H1 (cell line): ENCODE measurements at regions of chr14 and their contacts with region 1.

Region 1: DNA sequence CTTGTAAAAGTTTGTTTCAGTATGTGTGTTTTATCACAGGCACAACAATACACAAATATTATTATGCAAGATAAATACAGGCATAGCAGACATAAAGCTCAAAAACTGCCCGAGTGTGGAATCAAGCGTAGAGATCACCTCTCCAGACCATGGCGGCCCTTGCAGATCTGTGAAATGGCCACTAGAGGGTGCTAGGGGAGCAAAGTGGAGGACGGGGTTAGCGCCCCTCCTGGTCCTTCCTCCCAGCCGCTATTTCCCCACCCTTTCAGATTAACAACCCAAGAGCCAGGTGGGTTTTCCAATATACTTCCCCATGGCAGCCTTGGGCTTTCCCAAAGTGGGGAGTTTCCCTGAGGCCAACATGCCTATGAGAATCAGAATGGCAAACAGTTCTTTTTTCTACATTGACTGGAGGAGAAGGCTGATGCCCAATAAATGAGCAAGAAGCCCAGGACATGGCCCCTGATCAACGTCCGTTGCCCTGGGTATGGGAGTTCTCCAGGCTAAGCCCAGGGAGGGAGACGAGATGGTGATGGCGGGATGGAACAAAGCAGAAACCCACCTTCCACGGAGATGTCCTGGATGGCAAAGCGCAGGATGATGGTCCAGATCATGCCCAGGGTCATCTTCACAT is 67.4 kb downstream of the ACTN1 start:
- DNase-seq: peak; percentile 59 to 91
- H3K4me3 ChIP-seq: no peak overlapping the region
- H3K27ac ChIP-seq: no peak overlapping the region
- H3K4me1 ChIP-seq: no peaks in the 10 kb centered on the region; a peak in 1 of 7 replicates
- H3K27me3 ChIP-seq: no peaks in the 10 kb centered on the region
- CTCF ChIP-seq: peak; percentile 97 to 100 (median 99)
- EP300 ChIP-seq: no peak
- POLR2A ChIP-seq: no peak
- RAD21 ChIP-seq: peak; percentile 96 to 98

Region 2: DNA sequence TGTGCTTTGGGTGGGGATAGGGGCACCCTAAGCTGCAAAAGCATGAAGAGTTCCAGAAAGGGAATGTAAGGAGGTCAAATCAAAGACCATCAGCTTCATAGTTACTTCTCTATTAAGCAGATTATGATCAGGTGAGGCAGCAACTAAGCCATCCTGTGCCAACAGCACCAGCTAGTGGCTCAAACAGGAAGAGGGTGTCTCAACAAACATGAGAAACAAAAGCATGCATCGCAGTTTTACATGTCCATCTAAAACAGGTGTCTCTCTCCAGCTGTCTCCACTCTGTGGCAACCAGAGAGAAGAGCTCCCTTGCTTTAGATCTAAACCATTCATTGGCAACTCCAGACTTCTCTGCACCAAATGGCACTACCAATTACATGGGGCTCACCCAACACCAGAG is 14.5 kb after region 1 on chr14:
- CTCF ChIA-PET with region 1: interaction called, 186 read pairs
- POLR2A ChIA-PET with region 1: interaction called, 10 read pairs
- DNase-seq: no peak
- H3K4me3 ChIP-seq: no peak overlapping the region
- H3K27ac ChIP-seq: no peak overlapping the region
- H3K4me1 ChIP-seq: peaks cover 0 to 13% (median 9%) of the 10 kb centered on the region in 4 experiments; a peak in 5 of 7 replicates
- H3K27me3 ChIP-seq: no peaks in the 10 kb centered on the region
- CTCF ChIP-seq: peak; percentile 36 to 81 (median 53)
- EP300 ChIP-seq: no peak
- POLR2A ChIP-seq: no peak
- RAD21 ChIP-seq: peak; percentile 52 to 63

Region 3: DNA sequence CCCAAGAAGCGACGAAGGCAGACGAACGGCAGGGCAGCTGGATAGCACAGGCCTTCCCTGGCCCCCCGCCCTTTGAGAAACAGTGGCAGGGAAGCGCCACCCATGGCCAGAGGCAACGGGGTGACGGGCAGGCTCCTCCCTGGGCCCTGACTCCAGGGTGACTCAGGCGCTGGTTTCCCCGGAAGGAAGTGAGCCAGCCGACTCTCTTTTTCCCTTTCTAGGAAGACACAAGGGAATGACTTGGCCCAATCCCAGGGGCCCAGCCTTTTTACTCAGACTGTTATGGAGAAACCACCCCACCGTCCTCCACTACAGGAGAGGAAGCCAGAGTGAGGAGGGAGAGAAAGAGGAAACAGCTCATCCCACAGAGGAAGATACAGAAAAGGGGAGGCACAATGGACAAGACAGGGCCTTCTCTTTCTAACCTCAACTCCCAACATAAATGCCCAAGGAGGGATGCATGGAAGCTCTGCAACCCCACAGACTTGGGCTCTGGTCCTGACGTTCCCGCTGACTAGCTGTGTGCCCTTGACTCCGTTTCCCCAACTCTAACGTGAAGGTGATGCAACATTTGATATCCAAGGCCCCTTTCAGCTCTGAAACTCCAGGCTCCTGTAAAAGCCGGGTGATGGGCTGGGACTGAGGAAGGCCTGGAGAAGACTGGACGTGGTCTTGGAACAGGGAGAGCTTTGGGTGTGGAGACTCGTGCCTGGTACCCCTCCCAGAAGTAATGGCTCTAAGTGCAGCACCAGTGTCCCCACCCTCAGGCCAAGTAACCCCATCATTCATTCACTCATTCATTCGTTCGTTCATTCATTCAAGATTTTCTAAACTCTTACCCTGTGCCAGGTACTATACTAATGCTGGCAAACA is 39.6 kb after region 1 on chr14:
- CTCF ChIA-PET with region 1: interaction called, 10 read pairs
- POLR2A ChIA-PET with region 1: no interaction called
- DNase-seq: no peak
- H3K4me3 ChIP-seq: no peak overlapping the region
- H3K27ac ChIP-seq: no peak overlapping the region
- H3K4me1 ChIP-seq: peaks cover 0 to 10% (median 6%) of the 10 kb centered on the region in 4 experiments; a peak in 6 of 7 replicates
- H3K27me3 ChIP-seq: no peaks in the 10 kb centered on the region
- CTCF ChIP-seq: no peak
- EP300 ChIP-seq: no peak
- POLR2A ChIP-seq: no peak; a peak in 1 of 3 replicates
- RAD21 ChIP-seq: no peak

Region 4: DNA sequence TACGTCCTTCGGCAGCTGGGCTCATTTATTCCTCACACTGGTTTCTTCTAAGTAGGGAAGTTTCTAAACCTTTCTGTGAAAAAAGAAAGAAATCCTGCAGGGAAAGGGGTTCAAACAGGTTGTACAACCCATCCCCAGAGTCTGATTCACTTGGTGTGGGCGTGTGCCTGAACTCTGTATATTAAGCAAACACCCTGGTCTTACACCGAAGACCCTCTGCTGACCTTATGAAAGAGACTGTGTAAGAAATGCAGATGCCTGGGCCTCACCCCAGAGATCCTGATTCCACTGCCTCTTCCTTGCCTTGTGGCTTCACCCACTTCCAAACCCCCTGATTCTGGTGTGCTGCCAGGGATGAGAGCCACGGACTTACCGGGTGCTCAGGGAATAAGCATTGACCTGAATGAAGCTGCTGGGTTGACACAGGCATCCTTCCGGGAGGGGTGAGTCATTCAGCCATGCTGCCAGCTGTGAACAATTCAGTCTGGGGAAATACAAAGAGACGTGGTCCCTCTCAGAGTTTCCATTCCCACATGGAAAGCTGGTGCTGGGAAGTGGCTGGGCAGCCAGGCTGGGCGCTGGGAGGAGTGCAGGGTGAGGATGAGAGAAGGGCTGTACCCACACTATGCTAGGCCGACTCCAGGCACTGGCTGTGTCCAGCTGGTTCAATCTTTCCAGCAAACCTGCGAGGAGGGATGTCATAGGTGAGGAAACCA is 93.9 kb after region 1 on chr14:
- CTCF ChIA-PET with region 1: interaction called, 12 read pairs
- POLR2A ChIA-PET with region 1: interaction called, 3 read pairs
- DNase-seq: no peak
- H3K4me3 ChIP-seq: no peak overlapping the region
- H3K27ac ChIP-seq: no peak overlapping the region
- H3K4me1 ChIP-seq: peaks cover 3 to 18% (median 11%) of the 10 kb centered on the region in 4 experiments
- H3K27me3 ChIP-seq: no peaks in the 10 kb centered on the region
- CTCF ChIP-seq: no peak
- EP300 ChIP-seq: no peak
- POLR2A ChIP-seq: no peak
- RAD21 ChIP-seq: no peak; a peak in 1 of 4 replicates

Region 5: DNA sequence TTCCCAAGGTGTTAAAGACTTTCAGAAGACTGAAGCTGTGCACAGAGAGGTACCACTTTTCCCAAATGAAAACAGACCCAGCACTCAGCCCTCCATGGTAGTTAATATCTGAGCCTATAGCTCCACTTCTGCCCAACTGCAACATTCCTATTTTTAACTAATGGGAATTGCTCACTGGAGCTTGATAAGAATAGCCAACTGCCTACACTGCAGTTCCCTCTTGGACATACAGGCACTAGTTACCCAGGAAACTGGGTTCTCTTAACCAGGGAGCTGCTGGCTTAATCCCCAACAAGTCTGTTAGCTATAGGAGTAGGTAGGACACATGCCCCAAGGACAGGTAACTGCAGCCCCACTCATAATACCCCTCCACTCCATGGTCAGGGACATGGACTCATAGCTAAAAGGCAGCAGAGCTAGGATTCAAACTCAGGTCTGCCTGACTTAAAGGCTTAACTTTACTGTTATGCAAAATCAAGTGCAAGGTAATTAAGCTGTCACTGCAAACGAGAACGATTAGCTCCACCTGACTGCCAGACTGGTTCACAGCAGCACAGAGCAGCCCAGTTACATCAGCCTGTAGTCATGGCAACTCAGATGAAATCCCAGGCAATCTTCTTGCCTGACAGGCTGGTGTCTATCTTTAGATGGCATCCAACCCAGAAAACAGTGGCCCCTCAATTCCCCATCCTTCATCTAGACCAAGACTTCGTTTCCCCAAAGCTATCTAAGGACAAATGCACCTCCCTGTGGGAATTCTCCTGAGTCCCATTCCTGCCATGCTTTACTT is 144.5 kb after region 1 on chr14:
- CTCF ChIA-PET with region 1: interaction called, 10 read pairs
- POLR2A ChIA-PET with region 1: no interaction called
- DNase-seq: no peak
- H3K4me3 ChIP-seq: no peak overlapping the region
- H3K27ac ChIP-seq: no peak overlapping the region
- H3K4me1 ChIP-seq: peaks cover 0 to 14% (median 6%) of the 10 kb centered on the region in 4 experiments; a peak in 6 of 7 replicates
- H3K27me3 ChIP-seq: no peaks in the 10 kb centered on the region
- CTCF ChIP-seq: peak; percentile 51 to 62 (median 53)
- EP300 ChIP-seq: no peak
- POLR2A ChIP-seq: no peak
- RAD21 ChIP-seq: peak; percentile 58 to 69

Region 6: DNA sequence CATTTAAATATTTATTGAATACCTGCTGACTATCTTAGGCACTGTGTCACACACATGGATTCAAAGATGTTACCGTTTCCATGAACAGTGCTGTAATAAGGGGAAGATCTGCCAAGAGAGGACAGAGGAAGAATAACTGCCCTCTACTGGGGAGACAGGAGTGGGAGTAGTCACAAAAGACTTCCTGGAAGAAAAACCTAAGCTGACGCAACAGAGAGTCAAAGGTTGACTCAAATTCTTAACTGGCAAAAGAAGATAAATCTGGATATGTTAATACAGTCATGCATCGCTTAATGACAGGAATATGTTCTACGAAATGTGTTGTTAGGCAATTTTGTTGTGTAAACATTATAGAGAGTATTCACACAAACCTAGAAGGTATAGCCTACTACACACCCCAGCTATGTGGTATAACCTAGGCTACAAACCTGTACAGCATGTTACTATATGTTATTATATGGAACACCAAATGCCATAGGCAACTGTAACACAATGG is 189.7 kb after region 1 on chr14:
- CTCF ChIA-PET with region 1: interaction called, 71 read pairs
- POLR2A ChIA-PET with region 1: no interaction called
- DNase-seq: no peak
- H3K4me3 ChIP-seq: no peak overlapping the region
- H3K27ac ChIP-seq: no peak overlapping the region
- H3K4me1 ChIP-seq: peaks cover 0 to 7% (median 3%) of the 10 kb centered on the region in 4 experiments; a peak in 3 of 7 replicates
- H3K27me3 ChIP-seq: no peaks in the 10 kb centered on the region
- CTCF ChIP-seq: peak in 2 of 3 experiments; percentile 40 to 55; a peak in 2 of 4 replicates
- EP300 ChIP-seq: no peak
- POLR2A ChIP-seq: no peak
- RAD21 ChIP-seq: peak; percentile 51 to 54